Heart right ventricle (tissue), 16 donors: ENCODE measurements at regions of chr20 and their contacts with region 1.

Region 1: GRCh38 chr20:45362804-45363610 is at the start of gene SYS1:
- DNase-seq: peak; percentile 99
- ATAC-seq: peak; percentile 92 to 96 (median 94)
- H3K4me3 ChIP-seq: peak within 1 kb of the TSS; percentile 60 to 84 (median 70)
- H3K27ac ChIP-seq: peak within 1 kb of the TSS; percentile 86 to 97 (median 96)
- H3K4me1 ChIP-seq: peaks cover 10 to 79% (median 37%) of the 10 kb centered on the region in 9 donors
- H3K27me3 ChIP-seq: no peaks in the 10 kb centered on the region
- CTCF ChIP-seq: peak; percentile 75 to 95 (median 93)
- total RNA-seq, gene SYS1: 13.9 to 27.9 (median 18.2) TPM

Region 2: DNA sequence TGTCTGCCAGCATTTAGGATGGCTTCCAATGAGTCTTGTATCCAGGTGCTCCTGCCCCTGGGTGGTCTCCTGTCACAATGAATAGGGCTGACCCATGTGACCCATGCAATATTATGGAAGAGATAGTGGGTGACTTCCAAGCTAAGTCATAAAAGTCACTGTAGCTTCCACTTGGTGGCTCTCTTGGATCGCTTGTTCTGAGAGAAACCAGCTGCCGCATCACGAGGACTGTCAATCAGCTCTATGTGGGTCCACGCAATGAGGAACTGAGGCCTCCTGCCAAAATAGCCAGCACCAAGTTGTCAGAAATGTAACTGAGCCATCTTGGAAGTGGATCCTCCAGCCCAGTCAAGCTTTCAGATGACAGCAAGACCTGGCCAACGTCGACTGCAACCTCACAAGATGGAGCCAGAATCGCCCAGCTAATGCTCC is 40.0 kb before region 1 on chr20:
- intact Hi-C with region 1: loop called in 4 of 10 experiments (anchors 5 kb)
- DNase-seq: peak in 1 of 2 donors; percentile 62
- ATAC-seq: peak; percentile 68 to 85 (median 80)
- H3K4me3 ChIP-seq: no peak overlapping the region
- H3K27ac ChIP-seq: no peak overlapping the region
- H3K4me1 ChIP-seq: peaks cover 0 to 15% (median 0%) of the 10 kb centered on the region in 9 donors
- H3K27me3 ChIP-seq: peaks cover 0 to 3% (median 0%) of the 10 kb centered on the region in 7 donors
- CTCF ChIP-seq: peak in 8 of 9 donors; percentile 12 to 63 (median 48)

Region 3: DNA sequence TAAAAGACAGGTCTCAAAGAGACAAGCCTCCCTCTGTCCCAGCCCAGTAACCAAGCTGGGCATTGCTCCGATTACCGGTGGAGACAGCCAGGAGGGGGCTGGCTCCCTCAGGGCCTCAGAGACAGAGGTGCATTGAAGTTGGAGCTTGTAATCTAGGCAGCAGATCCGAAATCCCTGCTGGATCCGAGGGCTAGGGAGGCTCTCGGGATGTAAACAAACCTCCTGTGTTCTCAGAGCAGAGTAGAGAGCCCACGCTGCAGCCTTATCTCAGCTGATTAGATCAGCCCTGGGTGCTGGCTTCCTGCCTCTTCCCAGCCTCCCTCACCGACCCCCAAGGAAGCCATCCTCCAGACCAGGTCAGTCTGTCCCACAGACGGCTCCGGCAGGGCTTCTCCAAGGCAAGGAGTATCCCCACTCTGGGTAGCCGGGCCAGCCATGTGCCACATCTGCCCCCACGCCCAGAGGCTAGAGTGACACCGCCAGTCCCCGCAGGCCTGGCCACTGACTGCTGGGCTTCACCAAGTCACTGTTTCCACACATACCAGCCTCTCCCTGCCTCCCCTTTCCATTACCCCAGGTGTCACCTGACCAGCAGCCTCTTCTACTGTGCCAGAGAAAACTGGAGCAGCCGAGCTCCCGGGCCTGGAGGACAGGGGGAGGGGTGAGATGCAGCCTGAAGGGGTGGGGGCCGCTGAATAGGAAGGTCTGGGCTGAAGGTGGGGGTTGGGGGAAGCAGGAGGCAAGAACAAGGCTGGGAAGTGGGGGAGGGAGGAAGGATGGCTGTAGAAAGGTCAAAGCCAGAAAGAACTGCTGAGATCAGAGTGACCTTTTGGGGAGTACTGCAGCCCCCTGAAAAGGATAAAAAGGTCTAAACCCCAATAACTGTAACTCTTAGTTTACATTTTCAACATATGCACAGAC is 20.8 kb before region 1 on chr20:
- intact Hi-C with region 1: loop called in 4 of 10 experiments (anchors 1 to 2 kb)
- DNase-seq: peak; percentile 63 to 79
- ATAC-seq: peak; percentile 69 to 86 (median 78)
- H3K4me3 ChIP-seq: peak overlapping the region in 6 of 10 donors; percentile 9 to 33 (median 27)
- H3K27ac ChIP-seq: peak overlapping the region; percentile 83 to 97 (median 94)
- H3K4me1 ChIP-seq: peaks cover 11 to 100% (median 88%) of the 10 kb centered on the region in 9 donors
- H3K27me3 ChIP-seq: no peaks in the 10 kb centered on the region
- CTCF ChIP-seq: no peak

Region 4: DNA sequence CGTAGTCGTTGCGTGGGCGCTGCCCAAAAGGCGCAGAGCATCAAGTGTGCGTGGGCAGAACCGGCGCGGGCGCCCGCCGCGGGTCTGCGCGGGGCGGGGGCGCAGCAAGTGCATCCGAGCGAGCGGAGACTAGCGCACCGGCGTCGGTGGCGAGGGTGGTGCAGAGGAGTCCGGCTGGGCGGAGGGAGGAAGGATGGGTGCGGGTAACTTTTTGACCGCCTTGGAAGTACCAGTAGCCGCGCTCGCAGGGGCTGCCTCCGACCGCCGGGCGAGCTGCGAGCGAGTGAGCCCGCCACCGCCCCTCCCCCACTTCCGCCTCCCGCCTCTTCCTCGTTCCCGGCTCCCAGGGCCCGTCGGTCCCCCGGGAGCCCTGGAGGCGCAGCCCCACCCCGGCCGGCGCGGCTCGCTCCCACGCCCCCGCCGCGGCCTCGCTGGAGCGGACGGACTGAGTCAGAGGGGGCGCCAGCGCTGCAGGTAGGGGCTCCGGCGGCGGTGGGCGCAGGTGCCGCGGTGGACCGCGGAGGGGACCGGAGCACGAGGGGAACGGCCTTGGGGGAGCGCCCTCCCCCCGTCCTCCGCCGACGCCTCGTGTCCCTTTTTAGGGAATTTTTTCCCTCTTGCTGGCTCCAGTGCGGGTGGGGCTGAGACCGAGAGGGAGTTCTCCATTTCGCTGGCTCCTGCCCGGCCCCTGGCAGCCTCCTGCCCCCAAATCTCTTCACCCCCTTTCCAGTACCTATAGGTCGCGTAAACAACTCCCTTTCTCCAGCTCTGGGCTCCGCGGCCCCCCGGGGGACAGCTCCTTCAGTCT is 43.5 kb after region 1 on chr20:
- intact Hi-C with region 1: loop called in 2 of 10 experiments (anchors 2 to 5 kb)
- DNase-seq: peak; percentile 83 to 91
- ATAC-seq: peak; percentile 56 to 84 (median 71)
- H3K4me3 ChIP-seq: peak overlapping the region; percentile 41 to 97 (median 88)
- H3K27ac ChIP-seq: peak overlapping the region; percentile 94 to 100 (median 98)
- H3K4me1 ChIP-seq: peaks cover 0 to 47% (median 39%) of the 10 kb centered on the region in 9 donors
- H3K27me3 ChIP-seq: peaks cover 0 to 23% (median 0%) of the 10 kb centered on the region in 7 donors
- CTCF ChIP-seq: peak in 4 of 9 donors; percentile 9 to 45 (median 28)

Region 5: GRCh38 chr20:45415774-45416637 is 53.0 kb after region 1 on chr20 and contains the start of gene PIGT:
- intact Hi-C with region 1: loop called in 1 of 10 experiments (anchors 5 kb)
- DNase-seq: peak; percentile 84 to 89
- ATAC-seq: peak; percentile 63 to 93 (median 84)
- H3K4me3 ChIP-seq: peak within 1 kb of the TSS; percentile 60 to 98 (median 91)
- H3K27ac ChIP-seq: peak within 1 kb of the TSS; percentile 55 to 92 (median 83)
- H3K4me1 ChIP-seq: peaks cover 0 to 65% (median 46%) of the 10 kb centered on the region in 9 donors
- H3K27me3 ChIP-seq: no peaks in the 10 kb centered on the region
- CTCF ChIP-seq: no peak
- total RNA-seq, gene PIGT: 130 to 221 (median 144) TPM

Region 6: DNA sequence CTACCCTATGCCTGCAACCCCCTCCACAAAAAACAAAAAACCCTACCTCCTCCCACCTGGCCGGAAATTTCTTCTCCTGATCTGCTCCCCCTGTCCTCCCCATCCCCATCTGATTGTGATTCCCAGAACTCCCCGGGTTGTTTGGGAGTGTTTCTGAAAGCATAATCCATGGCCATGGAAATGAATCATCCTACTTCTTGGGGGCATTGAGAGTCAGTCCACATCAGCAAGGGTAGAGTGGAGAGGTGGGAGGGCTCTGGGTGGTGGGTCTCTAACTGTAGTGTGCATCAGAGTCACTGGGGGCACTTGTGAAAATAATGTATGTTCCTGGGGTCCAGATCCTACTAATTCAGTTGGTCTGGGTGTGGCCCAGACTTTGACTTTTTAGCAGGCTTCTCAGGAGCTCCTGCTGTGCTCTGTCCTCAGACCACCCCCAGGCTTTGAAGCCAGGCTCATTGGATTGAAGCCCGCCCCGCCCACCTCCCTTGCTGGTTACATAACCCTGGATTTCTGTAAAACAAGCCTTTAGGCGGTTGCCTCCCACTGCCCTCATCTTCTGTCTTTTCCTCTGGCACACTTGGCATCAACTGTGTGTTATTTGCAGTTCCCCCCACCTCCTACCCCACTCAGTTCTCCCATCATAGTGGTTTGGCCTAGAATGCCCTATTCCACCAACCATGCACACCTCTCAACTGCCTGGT is 63.5 kb after region 1 on chr20:
- intact Hi-C with region 1: no loop called
- DNase-seq: no peak
- ATAC-seq: peak in 6 of 8 donors; percentile 8 to 46 (median 27)
- H3K4me3 ChIP-seq: no peak overlapping the region
- H3K27ac ChIP-seq: no peak overlapping the region
- H3K4me1 ChIP-seq: peaks cover 0 to 16% (median 5%) of the 10 kb centered on the region in 9 donors
- H3K27me3 ChIP-seq: no peaks in the 10 kb centered on the region
- CTCF ChIP-seq: no peak

Region 7: GRCh38 chr20:45436732-45437391 is 73.9 kb after region 1 on chr20:
- intact Hi-C with region 1: loop called in 4 of 10 experiments (anchors 1 to 2 kb)
- DNase-seq: peak; percentile 89 to 90
- ATAC-seq: peak; percentile 93 to 97 (median 96)
- H3K4me3 ChIP-seq: peak overlapping the region; percentile 36 to 79 (median 59)
- H3K27ac ChIP-seq: peak overlapping the region in 9 of 10 donors; percentile 55 to 86 (median 76)
- H3K4me1 ChIP-seq: peaks cover 0 to 16% (median 11%) of the 10 kb centered on the region in 9 donors
- H3K27me3 ChIP-seq: no peaks in the 10 kb centered on the region
- CTCF ChIP-seq: peak in 8 of 9 donors; percentile 94 to 98 (median 97)